ENCODE measurements at regions of chr6 and their contacts with region 1.

Region 1: DNA sequence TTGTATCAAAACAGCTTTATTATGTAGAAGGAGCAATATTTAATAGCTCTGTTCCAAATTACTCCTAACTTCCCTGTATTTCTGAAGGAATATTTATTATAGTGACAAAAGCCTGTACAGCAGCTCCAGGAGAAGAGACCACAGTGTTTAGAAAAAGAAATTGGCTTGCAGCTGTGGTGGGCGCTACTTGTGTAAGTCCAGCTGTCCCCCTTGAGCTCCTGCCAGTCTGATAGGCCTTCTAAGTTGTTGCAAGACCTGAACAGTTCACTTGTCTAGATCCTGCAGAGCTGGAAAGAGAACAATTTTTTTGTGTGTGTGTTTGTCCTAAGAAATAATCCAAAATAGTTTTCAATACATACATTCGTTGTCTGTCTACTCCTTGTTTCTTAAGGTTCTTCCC is 86.6 kb downstream of the JARID2 start:
- DNase-seq: no peak
- H3K4me3 ChIP-seq: no peak overlapping the region
- H3K27ac ChIP-seq: peak overlapping the region; percentile 20; the same call in 1 of the 2 replicates
- H3K4me1 ChIP-seq: peaks cover 37% of the 10 kb centered on the region
- H3K27me3 ChIP-seq: no peaks in the 10 kb centered on the region
- CTCF ChIP-seq: no peak

Region 2: GRCh38 chr6:14775528-14775927 is 556.9 kb before region 1 on chr6:
- CTCF ChIA-PET with region 1: no interaction called
- POLR2A ChIA-PET with region 1: no interaction called
- intact Hi-C with region 1: no loop called
- DNase-seq: no peak
- H3K4me3 ChIP-seq: no peak overlapping the region
- H3K27ac ChIP-seq: no peak overlapping the region
- H3K4me1 ChIP-seq: 0 out of 2 replicates have a peak, but pooled peaks cover 3% of the 10 kb centered on the region
- H3K27me3 ChIP-seq: no peaks in the 10 kb centered on the region
- CTCF ChIP-seq: no peak

Region 3: DNA sequence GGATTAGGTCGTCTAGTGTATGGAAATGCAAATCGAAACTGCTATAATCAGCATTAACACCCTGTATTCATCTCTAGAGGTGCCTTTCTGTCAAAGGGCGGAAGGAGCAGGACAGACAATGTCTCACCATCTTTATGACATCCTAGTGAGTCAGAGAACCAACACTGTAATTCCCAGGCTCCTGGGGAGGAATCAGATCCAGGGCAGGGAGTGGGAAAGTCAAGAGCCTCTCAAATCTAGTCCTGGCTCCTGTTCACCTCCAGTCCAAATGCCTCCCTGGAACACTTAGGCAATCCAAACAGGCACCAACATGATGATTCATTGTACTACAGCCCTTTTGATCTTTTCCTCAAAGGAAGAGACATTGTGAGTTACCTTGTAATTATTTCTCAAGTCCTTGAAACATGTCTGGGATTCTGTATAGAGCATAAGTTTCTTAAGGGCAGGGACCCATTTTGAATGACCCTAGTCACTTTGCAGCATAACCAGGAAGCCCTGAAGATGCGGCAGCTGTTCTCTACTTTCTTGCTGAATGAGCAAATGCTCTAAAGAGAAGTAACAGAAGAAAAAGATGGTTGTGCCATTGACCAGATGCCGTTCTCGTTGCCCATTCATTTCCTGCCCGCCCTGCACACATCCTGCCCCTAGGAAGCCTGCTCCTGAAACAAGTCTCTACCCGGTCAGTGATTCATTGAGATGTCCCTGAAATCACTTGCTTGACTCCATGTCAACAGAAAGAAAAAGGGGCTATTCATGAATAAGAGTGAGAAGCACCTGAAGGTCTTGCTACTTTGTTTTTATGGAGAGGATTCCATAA is 199.4 kb before region 1 on chr6:
- CTCF ChIA-PET with region 1: no interaction called
- POLR2A ChIA-PET with region 1: no interaction called
- intact Hi-C with region 1: no loop called
- DNase-seq: peak; percentile 40 to 86
- H3K4me3 ChIP-seq: peak overlapping the region; percentile 33; the same call in 1 of the 2 replicates
- H3K27ac ChIP-seq: peak overlapping the region; percentile 78
- H3K4me1 ChIP-seq: peaks cover 21% of the 10 kb centered on the region
- H3K27me3 ChIP-seq: no peaks in the 10 kb centered on the region
- CTCF ChIP-seq: no peak

Region 4: GRCh38 chr6:15213838-15214400 is 118.5 kb before region 1 on chr6:
- CTCF ChIA-PET with region 1: no interaction called
- POLR2A ChIA-PET with region 1: no interaction called
- intact Hi-C with region 1: no loop called
- DNase-seq: no peak
- H3K4me3 ChIP-seq: no peak overlapping the region
- H3K27ac ChIP-seq: no peak overlapping the region
- H3K4me1 ChIP-seq: no peaks in the 10 kb centered on the region
- H3K27me3 ChIP-seq: no peaks in the 10 kb centered on the region
- CTCF ChIP-seq: no peak

Region 5: GRCh38 chr6:15368186-15368585 is 35.7 kb after region 1 on chr6:
- CTCF ChIA-PET with region 1: no interaction called
- POLR2A ChIA-PET with region 1: interaction called, 18 read pairs
- intact Hi-C with region 1: no loop called
- DNase-seq: no peak
- H3K4me3 ChIP-seq: no peak overlapping the region
- H3K27ac ChIP-seq: no peak overlapping the region
- H3K4me1 ChIP-seq: no peaks in the 10 kb centered on the region
- H3K27me3 ChIP-seq: no peaks in the 10 kb centered on the region
- CTCF ChIP-seq: no peak

Measured in PC-9 (cell line).